T-cell (primary cell): ENCODE measurements at regions of chr14 and their contacts with region 1.

Region 1: DNA sequence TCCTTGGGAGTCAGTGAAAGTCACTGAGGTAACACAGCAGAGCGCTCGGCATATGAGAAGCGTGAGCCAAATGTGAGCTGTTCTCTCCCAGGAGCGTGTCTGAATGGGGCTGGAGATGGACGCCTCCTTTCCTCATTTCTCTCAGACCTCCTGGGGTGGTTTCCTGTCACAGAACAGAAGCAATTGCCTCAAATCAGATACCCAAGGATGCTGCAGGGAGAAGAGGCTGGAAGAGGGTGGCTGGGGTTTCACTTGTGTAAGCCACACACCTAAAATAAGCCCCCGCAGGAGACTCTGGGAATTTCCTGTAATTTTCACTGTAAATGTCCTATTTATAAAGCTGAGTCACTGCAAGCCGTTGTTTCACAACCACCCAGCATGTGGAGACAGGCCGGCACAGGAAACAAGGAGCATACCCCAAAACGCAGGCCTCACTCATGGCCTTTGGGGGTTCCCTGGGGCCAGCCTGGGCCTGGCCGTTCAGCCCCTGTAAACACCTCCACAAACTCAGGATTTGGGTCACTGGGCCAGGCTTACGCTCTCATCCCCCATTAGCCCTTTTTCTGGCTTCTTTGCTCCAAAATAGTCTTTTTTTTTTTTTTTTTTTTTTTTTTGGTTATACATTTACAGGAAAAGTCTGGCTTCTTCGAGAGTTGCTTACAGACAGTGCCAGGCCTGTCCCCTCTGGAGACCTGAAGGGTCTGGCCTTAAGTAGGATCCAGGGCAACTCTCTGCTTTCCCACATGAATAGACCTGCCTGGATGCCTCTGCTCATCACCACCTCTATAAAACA is 55.3 kb downstream of the VCPKMT start:
- DNase-seq: peak in 9 of 35 experiments; percentile 11 to 66 (median 34)
- ATAC-seq: no peak
- H3K4me3 ChIP-seq: peak overlapping the region in 1 of 2 donors; percentile 41
- H3K4me3 Mint-ChIP-seq: peak overlapping the region; percentile 70 to 90 (median 88)
- H3K27ac ChIP-seq: peak overlapping the region; percentile 93
- H3K27ac Mint-ChIP-seq: peak overlapping the region; percentile 100
- H3K4me1 ChIP-seq: peaks cover 44 to 76% of the 10 kb centered on the region in 2 experiments
- H3K4me1 Mint-ChIP-seq: peaks cover 75 to 92% (median 82%) of the 10 kb centered on the region in 3 donors
- H3K27me3 ChIP-seq: no peaks in the 10 kb centered on the region
- H3K27me3 Mint-ChIP-seq: no peaks in the 10 kb centered on the region

Region 2: DNA sequence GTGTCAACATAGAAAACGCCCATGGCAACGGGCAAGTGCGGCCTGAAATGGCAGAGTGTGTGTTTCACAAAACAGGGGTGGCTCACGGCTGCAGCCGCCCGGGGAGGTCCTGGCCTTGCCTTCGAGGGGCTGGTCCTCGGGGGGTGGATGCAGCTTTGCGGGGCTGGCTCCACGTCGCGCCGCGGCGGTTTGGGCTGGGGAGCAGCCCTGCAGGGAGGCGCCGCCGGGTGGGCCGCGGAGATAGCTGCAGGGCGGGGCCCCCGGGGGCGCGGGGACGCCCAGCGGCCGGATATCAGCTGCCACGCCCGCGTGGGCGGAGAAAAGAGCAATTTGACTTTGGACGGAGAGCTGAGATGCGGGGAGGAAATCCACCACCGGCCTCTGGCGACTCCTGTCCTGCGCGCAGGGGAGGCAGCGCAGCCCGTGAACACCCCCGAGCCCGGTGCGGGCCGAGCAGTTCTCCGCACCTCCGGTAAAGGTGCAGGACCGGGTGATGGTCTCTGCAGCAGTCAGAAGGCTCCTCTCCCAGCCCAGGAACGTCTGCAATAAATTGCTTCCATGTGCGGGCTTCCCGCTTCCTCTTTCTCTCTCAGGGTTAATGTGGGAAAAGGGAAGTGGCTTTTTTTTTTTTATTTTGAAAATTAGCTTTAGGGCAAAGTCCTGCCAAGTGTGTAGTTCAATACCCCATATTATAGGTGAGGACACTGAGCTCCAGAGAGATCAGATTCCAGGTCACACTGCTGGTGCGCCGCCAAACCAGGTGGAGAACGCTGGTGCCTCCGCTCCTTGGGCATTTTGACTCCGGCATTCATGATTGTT is 57.6 kb before region 1 on chr14:
- CTCF ChIA-PET with region 1: interaction called, 3 to 18 read pairs
- POLR2A ChIA-PET with region 1: interaction called in 1 of 2 experiments, 13 read pairs
- DNase-seq: peak; percentile 59 to 86 (median 72)
- ATAC-seq: peak; percentile 40 to 47 (median 44)
- H3K4me3 ChIP-seq: peak overlapping the region; percentile 60 to 83
- H3K4me3 Mint-ChIP-seq: peak overlapping the region; percentile 73 to 78 (median 75)
- H3K27ac ChIP-seq: peak overlapping the region; percentile 100
- H3K27ac Mint-ChIP-seq: peak overlapping the region; percentile 96 to 98
- H3K4me1 ChIP-seq: peaks cover 42 to 59% of the 10 kb centered on the region in 2 experiments
- H3K4me1 Mint-ChIP-seq: peaks cover 46 to 62% (median 52%) of the 10 kb centered on the region in 3 donors
- H3K27me3 ChIP-seq: no peaks in the 10 kb centered on the region
- H3K27me3 Mint-ChIP-seq: no peaks in the 10 kb centered on the region

Region 3: DNA sequence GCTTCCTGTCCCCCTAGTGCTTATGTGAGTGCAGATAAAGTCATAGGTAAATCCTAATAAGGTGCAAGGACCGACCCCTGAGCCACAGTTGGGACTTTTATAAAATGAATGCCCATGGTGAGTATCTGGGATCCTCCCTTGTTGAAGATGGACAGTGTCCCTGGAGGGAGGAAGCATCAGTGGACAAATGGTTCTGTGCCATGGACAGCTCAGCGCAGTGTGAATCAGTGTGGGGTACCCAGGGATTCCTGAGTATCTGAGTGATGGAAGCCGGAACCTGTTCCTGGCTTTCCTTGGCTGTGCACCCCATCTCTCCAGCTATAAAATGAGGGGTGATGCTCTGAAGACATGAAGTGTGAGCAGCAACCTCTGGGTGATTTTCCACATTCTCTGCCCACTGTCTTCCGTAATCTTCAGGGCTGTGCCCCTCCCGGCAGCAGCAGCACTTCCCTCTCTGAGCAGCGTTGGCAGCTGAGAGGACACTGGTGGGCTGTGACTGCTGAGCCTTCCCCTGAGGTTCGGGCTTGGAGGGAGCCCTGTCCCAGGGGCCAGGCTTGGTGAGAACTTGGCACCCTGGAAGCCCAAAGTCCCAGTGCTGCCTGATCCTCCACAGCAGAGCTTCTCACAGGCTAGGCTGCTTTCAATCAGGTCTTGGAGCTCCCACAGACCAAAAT is 30.3 kb after region 1 on chr14:
- CTCF ChIA-PET with region 1: interaction called, 3 to 11 read pairs
- POLR2A ChIA-PET with region 1: interaction called, 4 to 19 read pairs
- DNase-seq: no peak
- ATAC-seq: no peak
- H3K4me3 ChIP-seq: no peak overlapping the region
- H3K4me3 Mint-ChIP-seq: peak overlapping the region in 2 of 3 donors; percentile 13 to 29
- H3K27ac ChIP-seq: no peak overlapping the region
- H3K27ac Mint-ChIP-seq: peak overlapping the region; percentile 62 to 82
- H3K4me1 ChIP-seq: peaks cover 57 to 74% of the 10 kb centered on the region in 2 experiments
- H3K4me1 Mint-ChIP-seq: peaks cover 82 to 89% (median 85%) of the 10 kb centered on the region in 3 donors
- H3K27me3 ChIP-seq: no peaks in the 10 kb centered on the region
- H3K27me3 Mint-ChIP-seq: no peaks in the 10 kb centered on the region

Region 4: GRCh38 chr14:50139192-50139591 is 78.1 kb after region 1 on chr14:
- CTCF ChIA-PET with region 1: no interaction called
- POLR2A ChIA-PET with region 1: no interaction called
- DNase-seq: no peak
- ATAC-seq: no peak
- H3K4me3 ChIP-seq: no peak overlapping the region
- H3K4me3 Mint-ChIP-seq: no peak overlapping the region
- H3K27ac ChIP-seq: no peak overlapping the region
- H3K27ac Mint-ChIP-seq: no peak overlapping the region
- H3K4me1 ChIP-seq: no peaks in the 10 kb centered on the region
- H3K4me1 Mint-ChIP-seq: no peaks in the 10 kb centered on the region
- H3K27me3 ChIP-seq: no peaks in the 10 kb centered on the region
- H3K27me3 Mint-ChIP-seq: no peaks in the 10 kb centered on the region

Region 5: DNA sequence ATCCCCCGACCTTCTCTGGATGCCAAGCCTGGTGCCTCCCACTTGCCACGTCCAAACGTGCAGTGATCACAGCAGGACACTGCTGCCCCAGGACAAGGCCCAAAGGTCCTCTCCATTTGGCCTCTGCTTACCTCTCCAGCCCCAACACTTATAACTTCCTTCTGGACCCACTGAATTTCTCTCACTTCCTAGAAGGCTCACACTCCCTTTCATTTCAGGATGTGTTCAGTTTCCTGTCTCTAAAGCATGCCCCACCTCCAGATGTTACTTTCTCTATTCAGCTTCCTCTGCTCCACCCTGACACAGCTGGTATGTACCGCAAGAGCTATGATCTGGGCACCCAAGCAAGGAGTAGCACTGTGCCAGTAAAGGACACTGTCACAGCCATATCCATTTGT is 302.6 kb after region 1 on chr14:
- CTCF ChIA-PET with region 1: no interaction called
- POLR2A ChIA-PET with region 1: no interaction called
- DNase-seq: peak in 34 of 35 experiments; percentile 13 to 76 (median 42)
- ATAC-seq: peak; percentile 89 to 96 (median 96)
- H3K4me3 ChIP-seq: peak overlapping the region; percentile 48 to 72
- H3K4me3 Mint-ChIP-seq: peak overlapping the region; percentile 80 to 86 (median 86)
- H3K27ac ChIP-seq: peak overlapping the region; percentile 83
- H3K27ac Mint-ChIP-seq: peak overlapping the region; percentile 92 to 93
- H3K4me1 ChIP-seq: peaks cover 11 to 37% of the 10 kb centered on the region in 2 experiments
- H3K4me1 Mint-ChIP-seq: peaks cover 34 to 47% (median 40%) of the 10 kb centered on the region in 3 donors
- H3K27me3 ChIP-seq: no peaks in the 10 kb centered on the region
- H3K27me3 Mint-ChIP-seq: no peaks in the 10 kb centered on the region